GM10248 (cell line): ENCODE measurements at regions of chr12 and their contacts with region 1.

Region 1: GRCh38 chr12:108664338-108665258 is 30.9 kb upstream of the SELPLG start:
- DNase-seq: peak; percentile 74
- CTCF ChIP-seq: peak; percentile 65

Region 2: GRCh38 chr12:108562348-108563135 is 102.1 kb before region 1 on chr12 and contains the start of gene ISCU:
- CTCF ChIA-PET with region 1: interaction called, 14 read pairs
- POLR2A ChIA-PET with region 1: no interaction called
- DNase-seq: peak; percentile 98
- CTCF ChIP-seq: no peak

Region 3: GRCh38 chr12:108618079-108618952 is 46.3 kb before region 1 on chr12:
- CTCF ChIA-PET with region 1: interaction called, 20 read pairs
- POLR2A ChIA-PET with region 1: no interaction called
- DNase-seq: peak; percentile 82
- CTCF ChIP-seq: peak; percentile 93

Region 4: DNA sequence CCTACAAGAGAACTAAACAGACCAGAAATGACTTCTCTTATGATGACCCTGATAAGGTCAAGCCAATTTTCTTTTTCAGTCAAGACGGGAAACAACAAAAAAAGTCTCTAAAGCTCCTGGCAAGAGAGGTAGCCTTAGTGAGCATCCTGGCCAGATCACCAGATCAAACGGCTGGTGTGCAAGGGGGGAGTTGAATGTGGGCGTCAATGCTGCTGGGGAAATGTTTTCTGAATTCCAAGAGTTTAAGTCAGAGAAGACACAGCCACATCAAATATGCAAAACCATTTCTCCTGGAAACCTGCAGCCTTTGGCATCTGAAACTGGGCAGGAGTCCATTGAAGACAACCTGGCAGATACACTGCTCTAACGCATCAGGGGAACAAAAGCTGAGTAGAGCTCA is 14.9 kb before region 1 on chr12:
- CTCF ChIA-PET with region 1: interaction called, 31 read pairs
- POLR2A ChIA-PET with region 1: interaction called, 6 read pairs
- DNase-seq: no peak
- CTCF ChIP-seq: no peak

Region 5: DNA sequence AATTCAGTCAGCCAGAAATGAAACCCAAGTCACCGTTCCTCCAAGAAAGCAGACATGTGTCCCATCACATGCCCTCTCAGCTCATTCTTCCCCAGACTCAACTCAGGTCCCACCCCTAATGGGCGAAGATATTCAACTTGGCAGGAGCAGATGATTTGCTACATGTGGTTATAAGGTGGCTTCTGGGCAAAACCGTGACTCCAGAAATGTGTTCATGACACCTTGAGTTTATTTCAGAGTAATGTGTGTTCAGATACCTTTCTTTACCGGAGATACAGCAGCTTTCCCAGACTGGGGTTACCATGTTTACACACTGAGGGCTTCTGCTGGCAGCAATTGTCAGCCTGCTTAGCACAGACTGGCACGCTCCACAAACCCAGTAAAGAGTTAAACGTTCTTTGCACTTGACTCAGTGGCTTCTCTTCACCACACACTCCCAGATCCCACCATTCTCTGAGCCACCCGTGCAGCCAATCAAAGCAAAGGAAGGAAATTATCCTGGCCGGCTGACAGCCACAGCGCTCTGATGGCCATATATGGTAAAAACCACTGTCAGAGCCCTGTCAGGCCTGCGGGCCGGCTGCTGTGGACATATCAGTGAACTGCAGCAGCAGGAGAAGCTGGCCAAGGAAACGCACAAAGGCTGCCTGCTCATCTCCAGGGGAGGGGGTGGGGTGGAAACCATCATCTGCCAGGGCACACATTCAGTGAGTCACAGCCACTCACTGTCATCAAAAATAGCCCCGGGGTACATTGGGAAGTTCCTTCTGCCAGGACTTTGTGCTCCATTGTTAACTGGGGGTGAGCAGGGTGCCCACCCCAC is 26.8 kb after region 1 on chr12:
- CTCF ChIA-PET with region 1: interaction called, 145 read pairs
- POLR2A ChIA-PET with region 1: interaction called, 3 read pairs
- DNase-seq: peak; percentile 57
- CTCF ChIP-seq: peak; percentile 11

Region 6: GRCh38 chr12:108784270-108784669 is 119.7 kb after region 1 on chr12:
- CTCF ChIA-PET with region 1: interaction called, 14 read pairs
- POLR2A ChIA-PET with region 1: no interaction called
- DNase-seq: no peak
- CTCF ChIP-seq: no peak

Region 7: GRCh38 chr12:109093022-109093918 is 428.7 kb after region 1 on chr12 and contains the start of gene ALKBH2:
- CTCF ChIA-PET with region 1: interaction called, 10 read pairs
- POLR2A ChIA-PET with region 1: no interaction called
- DNase-seq: peak; percentile 92
- CTCF ChIP-seq: peak; percentile 99